ENCODE measurements at regions of chr4 and their contacts with region 1.

Region 1: DNA sequence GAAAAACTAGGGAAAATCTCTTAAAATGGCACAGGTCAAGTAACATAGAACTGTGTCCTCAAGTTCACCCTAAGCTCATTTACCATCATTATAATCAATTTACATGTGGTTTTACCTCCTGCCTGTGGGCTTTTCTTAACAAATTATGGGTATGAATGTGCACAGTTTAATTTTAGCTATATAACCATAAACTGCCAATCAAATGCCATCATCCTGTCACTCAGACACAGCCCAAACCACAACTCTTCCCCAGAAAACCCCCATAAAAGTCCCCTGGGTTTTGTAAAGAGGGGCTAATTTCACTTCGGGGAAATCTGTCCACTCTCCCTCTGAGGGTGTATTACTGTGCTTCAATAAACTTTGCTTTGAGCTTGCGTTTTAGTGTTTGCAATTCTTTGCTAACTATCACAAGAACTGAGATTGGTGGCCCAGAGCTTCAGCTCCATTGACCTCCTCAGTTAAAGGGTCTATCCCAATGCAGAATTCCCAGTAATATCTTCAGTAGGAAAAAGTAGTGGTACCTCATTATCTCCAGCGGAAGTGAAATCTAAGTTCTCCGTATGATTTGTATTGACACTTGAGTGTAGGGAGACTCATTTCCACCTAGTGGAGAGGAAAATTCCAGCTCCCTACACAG is 394.6 kb downstream of the SPOCK3 start:
- DNase-seq: no peak
- H3K4me3 ChIP-seq: no peak overlapping the region
- H3K27ac ChIP-seq: no peak overlapping the region
- H3K4me1 ChIP-seq: no peaks in the 10 kb centered on the region
- H3K27me3 ChIP-seq: no peaks in the 10 kb centered on the region
- CTCF ChIP-seq: no peak
- POLR2A ChIP-seq: no peak

Region 2: GRCh38 chr4:166724369-166724768 is 115.4 kb before region 1 on chr4:
- intact Hi-C with region 1: no loop called
- DNase-seq: no peak
- H3K4me3 ChIP-seq: no peak overlapping the region
- H3K27ac ChIP-seq: no peak overlapping the region
- H3K4me1 ChIP-seq: no peaks in the 10 kb centered on the region
- H3K27me3 ChIP-seq: no peaks in the 10 kb centered on the region
- CTCF ChIP-seq: no peak
- POLR2A ChIP-seq: no peak

Region 3: GRCh38 chr4:166882221-166882620 is 42.5 kb after region 1 on chr4:
- intact Hi-C with region 1: loop called (anchors 2 kb)
- DNase-seq: no peak
- H3K4me3 ChIP-seq: no peak overlapping the region
- H3K27ac ChIP-seq: no peak overlapping the region
- H3K4me1 ChIP-seq: no peaks in the 10 kb centered on the region
- H3K27me3 ChIP-seq: no peaks in the 10 kb centered on the region
- CTCF ChIP-seq: no peak
- POLR2A ChIP-seq: no peak

Region 4: DNA sequence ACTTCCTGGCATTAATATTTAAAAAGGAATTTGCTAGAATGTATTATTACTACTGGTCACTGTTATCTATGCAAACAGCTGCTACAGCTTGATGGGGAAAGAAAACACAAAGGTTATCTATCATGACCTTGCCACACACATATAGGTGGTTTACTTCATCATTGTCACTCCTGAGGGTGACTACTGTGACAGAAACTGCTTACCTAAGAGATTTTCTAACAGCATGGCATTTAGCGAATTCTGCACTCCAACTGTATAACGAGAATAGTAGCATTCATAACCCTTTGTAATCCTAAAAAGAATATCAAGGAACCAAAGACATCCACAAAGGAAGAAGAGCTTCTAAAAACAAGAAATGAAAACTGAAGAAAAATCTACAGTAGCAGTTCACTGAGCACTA is 469.1 kb after region 1 on chr4:
- intact Hi-C with region 1: no loop called
- DNase-seq: no peak
- H3K4me3 ChIP-seq: no peak overlapping the region
- H3K27ac ChIP-seq: no peak overlapping the region
- H3K4me1 ChIP-seq: no peaks in the 10 kb centered on the region
- H3K27me3 ChIP-seq: no peaks in the 10 kb centered on the region
- CTCF ChIP-seq: no peak
- POLR2A ChIP-seq: no peak